PC-3 (cell line): ENCODE measurements at regions of chr9 and their contacts with region 1.

Region 1: DNA sequence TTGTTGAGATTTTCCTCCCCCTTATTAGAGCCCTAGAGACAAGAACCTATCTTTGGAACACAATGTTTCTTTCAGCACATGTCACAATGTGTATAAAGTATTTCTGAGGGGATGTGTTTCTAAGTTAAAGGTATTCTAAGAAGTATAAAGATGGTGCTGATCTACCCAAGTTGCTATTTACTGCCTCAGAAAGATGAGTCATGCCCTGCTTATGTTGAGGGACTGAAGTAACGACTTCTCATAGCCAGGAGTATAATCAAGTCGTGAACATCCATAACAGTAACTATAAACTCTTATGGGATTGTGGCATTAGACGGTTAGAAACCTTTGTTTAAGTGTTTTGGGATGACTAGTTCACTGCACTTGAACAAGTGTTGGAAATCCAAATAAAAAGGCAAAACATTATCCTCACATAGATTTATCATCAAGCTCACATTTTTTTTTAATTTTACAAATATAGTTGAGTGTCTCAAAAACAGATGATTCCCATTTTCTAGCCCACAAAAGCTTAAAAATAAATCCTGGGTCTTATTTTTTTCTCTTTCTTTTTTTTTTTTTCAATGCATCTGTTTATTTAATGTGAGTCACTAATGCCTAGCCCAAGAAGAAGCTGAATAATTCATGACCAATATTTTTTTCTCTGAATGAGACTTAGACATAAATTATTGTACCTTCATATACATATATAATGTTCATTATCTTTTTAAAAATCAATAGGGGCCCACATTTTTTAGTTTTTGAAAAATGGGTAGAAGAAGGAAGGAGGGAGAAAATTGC is 12.2 kb upstream of the TMEM252 start:
- DNase-seq: peak; percentile 78
- ATAC-seq: peak; percentile 89
- H3K4me3 ChIP-seq: peak overlapping the region; percentile 41; the same call in 1 of the 2 replicates
- H3K27ac ChIP-seq: peak overlapping the region; percentile 83
- H3K4me1 ChIP-seq: peaks cover 41% of the 10 kb centered on the region
- H3K27me3 ChIP-seq: no peaks in the 10 kb centered on the region
- CTCF ChIP-seq: no peak

Region 2: GRCh38 chr9:68507130-68507805 is 45.6 kb before region 1 on chr9:
- CTCF ChIA-PET with region 1: no interaction called
- POLR2A ChIA-PET with region 1: no interaction called
- intact Hi-C with region 1: loop called (anchors 10 kb)
- DNase-seq: peak; percentile 35
- ATAC-seq: no peak
- H3K4me3 ChIP-seq: no peak overlapping the region
- H3K27ac ChIP-seq: no peak overlapping the region
- H3K4me1 ChIP-seq: peaks cover 15% of the 10 kb centered on the region
- H3K27me3 ChIP-seq: no peaks in the 10 kb centered on the region
- CTCF ChIP-seq: peak; percentile 66; the same call in 1 of the 2 replicates

Region 3: GRCh38 chr9:68702493-68702892 is 149.6 kb after region 1 on chr9:
- CTCF ChIA-PET with region 1: no interaction called
- POLR2A ChIA-PET with region 1: no interaction called
- intact Hi-C with region 1: no loop called
- DNase-seq: no peak
- ATAC-seq: no peak
- H3K4me3 ChIP-seq: no peak overlapping the region
- H3K27ac ChIP-seq: no peak overlapping the region
- H3K4me1 ChIP-seq: peaks cover 4% of the 10 kb centered on the region; the same call in 1 of the 2 replicates
- H3K27me3 ChIP-seq: peaks cover 73% of the 10 kb centered on the region
- CTCF ChIP-seq: no peak